HEK293 (cell line): ENCODE measurements at regions of chr6 and their contacts with region 1.

Region 1: GRCh38 chr6:144582939-144583613 is 297.9 kb downstream of the UTRN start:
- H3K4me3 ChIP-seq: no peak overlapping the region
- H3K27ac ChIP-seq: no peak overlapping the region
- H3K4me1 ChIP-seq: peaks cover 3% of the 10 kb centered on the region; the same call in 1 of the 2 replicates
- CTCF ChIP-seq: no peak

Region 2: DNA sequence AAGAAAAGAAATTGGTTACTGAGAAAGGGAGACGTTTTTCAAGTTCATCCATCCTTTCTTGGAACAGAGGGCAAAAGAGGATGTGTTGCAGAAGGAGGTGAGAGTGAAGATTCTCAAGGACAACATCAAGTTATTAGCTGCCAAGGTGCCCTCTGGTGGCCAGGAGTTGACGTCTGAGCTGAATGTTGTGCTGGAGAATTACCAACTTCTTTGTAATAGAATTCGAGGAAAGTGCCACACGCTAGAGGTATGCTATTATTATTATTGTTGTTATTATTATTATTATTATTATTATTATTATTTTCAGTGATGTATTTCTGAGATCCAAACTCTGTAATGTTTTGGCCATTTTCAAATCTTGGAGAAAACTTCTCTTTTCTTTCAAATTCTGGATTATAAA is 100.9 kb before region 1 on chr6:
- CTCF ChIA-PET with region 1: no interaction called
- POLR2A ChIA-PET with region 1: no interaction called
- H3K4me3 ChIP-seq: no peak overlapping the region
- H3K27ac ChIP-seq: no peak overlapping the region
- H3K4me1 ChIP-seq: no peaks in the 10 kb centered on the region
- CTCF ChIP-seq: no peak

Region 3: DNA sequence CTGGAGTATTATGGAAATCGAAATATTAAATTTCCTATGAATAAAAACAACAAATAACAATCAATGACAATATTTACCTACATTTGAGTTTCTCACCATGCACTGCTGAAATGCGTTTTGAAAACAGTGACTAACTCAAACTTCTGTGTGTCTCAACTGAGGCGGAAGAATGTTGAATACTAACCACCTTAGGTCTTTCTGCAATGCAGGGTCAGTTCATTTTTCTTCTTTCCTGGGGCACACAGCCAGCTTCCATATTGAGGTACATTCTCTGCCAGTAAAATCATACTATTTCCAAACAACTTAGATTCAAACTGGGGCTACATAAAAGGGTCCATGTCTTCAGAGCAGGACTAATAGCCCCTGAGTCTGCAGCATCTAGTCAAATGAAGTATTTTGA is 12.2 kb after region 1 on chr6:
- CTCF ChIA-PET with region 1: interaction called, 13 read pairs
- POLR2A ChIA-PET with region 1: interaction called, 5 read pairs
- H3K4me3 ChIP-seq: no peak overlapping the region
- H3K27ac ChIP-seq: no peak overlapping the region
- H3K4me1 ChIP-seq: no peaks in the 10 kb centered on the region
- CTCF ChIP-seq: no peak

Region 4: GRCh38 chr6:144667532-144668503 is 84.7 kb after region 1 on chr6:
- CTCF ChIA-PET with region 1: no interaction called
- POLR2A ChIA-PET with region 1: no interaction called
- H3K4me3 ChIP-seq: no peak overlapping the region
- H3K27ac ChIP-seq: no peak overlapping the region
- H3K4me1 ChIP-seq: peaks cover 3% of the 10 kb centered on the region; the same call in 1 of the 2 replicates
- CTCF ChIP-seq: no peak

Region 5: GRCh38 chr6:144778773-144779492 is 195.9 kb after region 1 on chr6:
- CTCF ChIA-PET with region 1: interaction called, 10 read pairs
- POLR2A ChIA-PET with region 1: no interaction called
- H3K4me3 ChIP-seq: no peak overlapping the region
- H3K27ac ChIP-seq: no peak overlapping the region
- H3K4me1 ChIP-seq: no peaks in the 10 kb centered on the region
- CTCF ChIP-seq: no peak

Region 6: DNA sequence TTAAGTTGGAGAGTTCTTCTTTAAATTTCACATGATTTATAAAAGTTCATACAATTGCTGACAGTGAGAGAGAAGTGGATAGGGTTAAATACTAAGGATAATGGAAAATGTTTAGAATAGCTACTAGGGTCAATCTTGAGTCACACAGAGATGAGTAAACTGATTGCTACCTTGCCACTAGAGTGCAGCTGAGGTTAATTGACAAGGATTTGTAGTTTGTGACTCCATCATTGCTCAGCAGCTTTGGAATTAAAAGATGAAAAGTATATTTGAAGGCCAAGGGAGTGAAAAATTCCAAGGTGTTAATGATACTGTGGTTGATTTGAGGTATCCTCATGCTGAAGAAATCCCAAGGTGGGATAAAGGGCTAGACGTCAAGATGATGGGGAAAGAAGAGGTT is 226.0 kb after region 1 on chr6:
- CTCF ChIA-PET with region 1: no interaction called
- POLR2A ChIA-PET with region 1: no interaction called
- H3K4me3 ChIP-seq: no peak overlapping the region
- H3K27ac ChIP-seq: no peak overlapping the region
- H3K4me1 ChIP-seq: no peaks in the 10 kb centered on the region
- CTCF ChIP-seq: no peak

Region 7: GRCh38 chr6:145028144-145028818 is 445.2 kb after region 1 on chr6:
- CTCF ChIA-PET with region 1: interaction called, 20 read pairs
- POLR2A ChIA-PET with region 1: no interaction called
- H3K4me3 ChIP-seq: no peak overlapping the region
- H3K27ac ChIP-seq: no peak overlapping the region
- H3K4me1 ChIP-seq: no peaks in the 10 kb centered on the region
- CTCF ChIP-seq: peak; percentile 23; the same call in 1 of the 2 replicates

Region 8: DNA sequence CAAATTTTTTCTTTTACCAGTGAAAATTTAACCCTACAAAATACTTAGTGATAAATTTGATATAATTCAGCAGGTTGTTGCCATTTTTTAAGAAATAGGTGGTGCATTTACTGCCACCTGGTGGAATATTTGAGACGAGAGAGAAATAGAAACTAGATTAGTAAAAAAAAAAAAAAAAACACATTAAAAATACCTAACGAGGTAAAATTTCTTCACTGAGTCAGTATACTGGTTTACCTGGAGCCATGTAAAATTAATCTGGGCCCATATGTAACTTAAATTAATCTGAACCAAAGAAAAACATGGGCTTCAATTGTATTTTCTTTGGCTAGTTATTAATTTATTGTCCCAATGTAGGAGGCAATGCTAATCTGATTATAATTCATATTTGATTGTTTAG is 631.5 kb after region 1 on chr6:
- CTCF ChIA-PET with region 1: interaction called, 16 read pairs
- POLR2A ChIA-PET with region 1: no interaction called
- H3K4me3 ChIP-seq: no peak overlapping the region
- H3K27ac ChIP-seq: no peak overlapping the region
- H3K4me1 ChIP-seq: no peaks in the 10 kb centered on the region
- CTCF ChIP-seq: no peak

Region 9: GRCh38 chr6:145633981-145634627 is 1051.0 kb after region 1 on chr6:
- CTCF ChIA-PET with region 1: interaction called, 22 read pairs
- POLR2A ChIA-PET with region 1: no interaction called
- H3K4me3 ChIP-seq: no peak overlapping the region
- H3K27ac ChIP-seq: no peak overlapping the region
- H3K4me1 ChIP-seq: peaks cover 10% of the 10 kb centered on the region; the same call in 1 of the 2 replicates
- CTCF ChIP-seq: peak; percentile 89